RWPE1 (cell line): ENCODE measurements at regions of chr21 and their contacts with region 1.

Region 1: DNA sequence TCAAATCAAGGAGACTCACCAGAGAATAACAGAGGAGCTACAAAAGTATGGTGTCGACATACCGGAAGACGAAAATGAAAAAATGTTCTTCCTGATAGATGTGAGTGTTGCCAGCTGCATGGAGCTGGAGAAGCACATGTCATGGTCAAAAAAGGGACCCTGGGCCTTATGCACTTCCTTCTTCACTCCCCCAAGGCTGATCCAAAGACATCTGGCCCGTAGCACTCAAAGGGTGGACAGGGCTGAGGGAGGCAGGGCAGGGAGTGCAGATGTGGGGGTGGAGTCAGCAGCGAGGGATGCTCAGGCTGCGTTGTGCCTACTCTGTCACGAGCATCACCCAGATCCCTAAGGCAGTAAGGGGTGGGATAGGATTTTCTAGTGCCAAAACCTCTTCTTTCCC is 19.4 kb downstream of the MX1 start:
- DNase-seq: no peak
- H3K27ac ChIP-seq: no peak overlapping the region
- CTCF ChIP-seq: no peak

Region 2: DNA sequence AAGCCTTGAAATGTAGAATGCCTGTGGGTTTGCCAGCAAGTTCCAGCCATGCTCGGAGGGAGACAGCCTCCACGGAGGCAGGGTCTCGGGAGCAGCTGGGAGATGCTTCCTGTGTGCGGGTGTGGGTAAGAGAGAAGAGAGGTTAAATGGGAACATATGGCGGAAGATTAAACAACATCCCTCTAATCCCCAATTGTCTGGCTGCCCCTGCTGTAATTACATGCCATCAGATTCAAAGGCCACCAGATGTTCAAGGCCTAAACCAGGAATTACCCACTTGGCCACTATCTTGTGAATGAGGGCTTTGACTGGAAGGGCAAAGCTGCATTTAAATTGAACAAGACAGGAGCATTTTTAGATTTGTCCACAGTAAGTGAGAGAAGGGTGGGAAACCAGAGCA is 358.9 kb before region 1 on chr21:
- CTCF ChIA-PET with region 1: no interaction called
- POLR2A ChIA-PET with region 1: no interaction called
- DNase-seq: no peak
- H3K27ac ChIP-seq: no peak overlapping the region
- CTCF ChIP-seq: no peak

Region 3: DNA sequence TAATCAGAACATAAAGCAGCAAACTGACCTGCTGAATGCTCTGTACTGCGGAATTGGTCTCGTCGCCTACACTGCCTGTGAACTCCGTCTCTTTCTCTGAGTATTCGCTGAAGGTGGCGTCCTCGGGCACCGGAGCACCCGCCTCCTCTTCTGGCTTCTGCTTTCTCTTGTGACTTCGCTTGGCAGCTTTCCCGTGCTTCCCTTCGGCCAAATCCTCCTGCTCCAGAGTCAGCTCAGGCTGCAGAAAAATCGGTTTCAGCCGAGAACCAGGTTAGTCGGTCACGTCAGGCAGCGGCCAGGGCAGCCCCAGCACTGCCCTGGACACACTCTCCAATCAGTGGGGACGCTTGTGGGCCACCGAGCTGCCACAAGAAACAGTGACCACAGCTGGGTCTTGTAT is 357.2 kb after region 1 on chr21:
- CTCF ChIA-PET with region 1: no interaction called
- POLR2A ChIA-PET with region 1: interaction called, 21 read pairs
- DNase-seq: no peak
- H3K27ac ChIP-seq: peak overlapping the region; percentile 34
- CTCF ChIP-seq: no peak